ENCODE measurements at regions of chr19 and their contacts with region 1.

Region 1: GRCh38 chr19:36378625-36379509 is at the start of gene ZFP14:
- DNase-seq: peak; percentile 96
- H3K4me3 Mint-ChIP-seq: peak within 1 kb of the TSS; percentile 94
- H3K27ac Mint-ChIP-seq: peak within 1 kb of the TSS; percentile 82
- H3K4me1 Mint-ChIP-seq: peaks cover 8% of the 10 kb centered on the region
- H3K27me3 Mint-ChIP-seq: no peaks in the 10 kb centered on the region
- CTCF ChIP-seq: peak; percentile 30
- total RNA-seq, gene ZFP14: 1.5 and 1.7 TPM in 2 replicates

Region 2: GRCh38 chr19:36132489-36132891 is 246.4 kb before region 1 on chr19:
- CTCF ChIA-PET with region 1: no interaction called
- POLR2A ChIA-PET with region 1: no interaction called
- intact Hi-C with region 1: loop called (anchors 2 kb)
- DNase-seq: peak; percentile 100
- H3K4me3 Mint-ChIP-seq: no peak overlapping the region
- H3K27ac Mint-ChIP-seq: peak overlapping the region; percentile 71
- H3K4me1 Mint-ChIP-seq: peaks cover 34% of the 10 kb centered on the region
- H3K27me3 Mint-ChIP-seq: no peaks in the 10 kb centered on the region
- CTCF ChIP-seq: no peak

Region 3: GRCh38 chr19:36340786-36341386 is 38.0 kb before region 1 on chr19:
- CTCF ChIA-PET with region 1: no interaction called
- POLR2A ChIA-PET with region 1: no interaction called
- intact Hi-C with region 1: no loop called
- DNase-seq: no peak
- H3K4me3 Mint-ChIP-seq: no peak overlapping the region
- H3K27ac Mint-ChIP-seq: no peak overlapping the region
- H3K4me1 Mint-ChIP-seq: no peaks in the 10 kb centered on the region
- H3K27me3 Mint-ChIP-seq: no peaks in the 10 kb centered on the region
- CTCF ChIP-seq: no peak

Region 4: DNA sequence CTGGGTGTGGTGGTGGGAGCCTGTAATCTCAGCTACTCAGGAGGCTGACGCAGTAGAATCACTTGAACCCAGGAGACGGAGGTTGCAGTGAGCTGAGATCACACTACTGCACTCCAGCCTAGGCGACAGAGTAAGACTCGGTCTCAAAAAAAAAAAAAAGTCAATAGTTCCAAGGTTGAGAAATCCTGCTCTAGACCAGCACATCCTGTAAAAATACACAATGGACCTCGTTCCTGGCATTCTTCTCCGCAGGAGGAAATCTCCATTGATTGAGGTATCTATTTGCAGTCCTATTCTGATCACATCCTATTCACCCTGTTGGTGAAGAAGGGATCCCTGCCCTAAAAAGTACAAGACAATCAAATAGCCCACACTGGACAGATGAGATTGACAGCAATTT is 15.0 kb before region 1 on chr19:
- CTCF ChIA-PET with region 1: interaction called, 10 read pairs
- POLR2A ChIA-PET with region 1: interaction called, 16 read pairs
- intact Hi-C with region 1: no loop called
- DNase-seq: no peak
- H3K4me3 Mint-ChIP-seq: no peak overlapping the region
- H3K27ac Mint-ChIP-seq: no peak overlapping the region
- H3K4me1 Mint-ChIP-seq: no peaks in the 10 kb centered on the region
- H3K27me3 Mint-ChIP-seq: no peaks in the 10 kb centered on the region
- CTCF ChIP-seq: no peak

Region 5: DNA sequence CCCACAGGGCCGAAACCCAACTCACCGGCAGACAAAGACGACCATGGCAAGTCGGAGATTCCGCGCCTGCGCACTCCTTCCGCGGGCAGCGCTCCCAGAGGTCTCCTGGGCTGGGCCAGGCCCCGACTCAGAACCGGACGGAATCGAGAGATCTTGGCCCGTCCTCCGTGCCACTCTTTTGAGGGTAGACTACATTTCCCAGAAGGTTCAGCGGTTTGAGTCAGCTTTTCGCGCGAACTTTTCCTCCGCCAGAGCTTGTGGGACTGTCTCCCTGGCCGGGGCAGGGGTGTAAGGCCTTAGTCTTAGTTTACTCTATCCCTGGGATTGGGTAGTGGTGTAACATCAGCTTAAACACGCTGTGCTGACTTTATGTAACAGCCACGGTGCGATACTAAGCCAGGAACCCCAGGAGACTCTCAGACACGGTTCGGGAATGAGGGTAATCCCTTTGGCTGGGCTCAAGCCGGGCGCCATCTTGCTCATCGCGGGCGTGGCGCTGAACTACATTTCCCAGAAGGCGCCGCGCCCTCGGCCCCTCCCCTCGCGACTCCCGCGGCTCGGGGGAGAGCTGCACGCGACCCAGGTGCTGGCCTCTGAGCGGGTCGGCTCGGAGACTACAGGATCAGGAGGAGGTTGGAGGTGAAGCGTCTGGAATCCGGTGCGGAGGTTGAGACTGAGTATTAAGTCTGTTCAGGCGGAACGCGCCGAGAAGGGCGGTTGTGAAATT is 149.5 kb after region 1 on chr19 and contains the start of gene ZNF260:
- CTCF ChIA-PET with region 1: interaction called, 7 read pairs
- POLR2A ChIA-PET with region 1: interaction called, 19 read pairs
- intact Hi-C with region 1: no loop called
- DNase-seq: peak; percentile 95
- H3K4me3 Mint-ChIP-seq: peak within 1 kb of the TSS; percentile 96
- H3K27ac Mint-ChIP-seq: peak within 1 kb of the TSS; percentile 99
- H3K4me1 Mint-ChIP-seq: peaks cover 9% of the 10 kb centered on the region
- H3K27me3 Mint-ChIP-seq: no peaks in the 10 kb centered on the region
- CTCF ChIP-seq: no peak
- total RNA-seq, gene ZNF260: 13.8 and 14.5 TPM in 2 replicates

Region 6: GRCh38 chr19:36687214-36688056 is 308.6 kb after region 1 on chr19 and contains the start of gene ZNF567:
- CTCF ChIA-PET with region 1: interaction called, 6 read pairs
- POLR2A ChIA-PET with region 1: interaction called, 7 read pairs
- intact Hi-C with region 1: loop called (anchors 5 kb)
- DNase-seq: peak; percentile 99
- H3K4me3 Mint-ChIP-seq: peak within 1 kb of the TSS; percentile 100
- H3K27ac Mint-ChIP-seq: peak within 1 kb of the TSS; percentile 98
- H3K4me1 Mint-ChIP-seq: peaks cover 13% of the 10 kb centered on the region
- H3K27me3 Mint-ChIP-seq: no peaks in the 10 kb centered on the region
- CTCF ChIP-seq: no peak
- total RNA-seq, gene ZNF567: 6.1 and 6.6 TPM in 2 replicates

Measured in MCF 10A (cell line).